Posterior cingulate gyrus (tissue), 11 donors: ENCODE measurements at regions of chr3 and their contacts with region 1.

Region 1: GRCh38 chr3:102229062-102229655 is 205.7 kb upstream of the ZPLD1 start:
- DNase-seq: peak; percentile 47 to 96 (median 81)

Region 2: GRCh38 chr3:101695779-101696372 is 533.3 kb before region 1 on chr3:
- intact Hi-C with region 1: loop called (anchors 5 kb)
- DNase-seq: peak in 2 of 10 donors; percentile 19 to 23

Region 3: DNA sequence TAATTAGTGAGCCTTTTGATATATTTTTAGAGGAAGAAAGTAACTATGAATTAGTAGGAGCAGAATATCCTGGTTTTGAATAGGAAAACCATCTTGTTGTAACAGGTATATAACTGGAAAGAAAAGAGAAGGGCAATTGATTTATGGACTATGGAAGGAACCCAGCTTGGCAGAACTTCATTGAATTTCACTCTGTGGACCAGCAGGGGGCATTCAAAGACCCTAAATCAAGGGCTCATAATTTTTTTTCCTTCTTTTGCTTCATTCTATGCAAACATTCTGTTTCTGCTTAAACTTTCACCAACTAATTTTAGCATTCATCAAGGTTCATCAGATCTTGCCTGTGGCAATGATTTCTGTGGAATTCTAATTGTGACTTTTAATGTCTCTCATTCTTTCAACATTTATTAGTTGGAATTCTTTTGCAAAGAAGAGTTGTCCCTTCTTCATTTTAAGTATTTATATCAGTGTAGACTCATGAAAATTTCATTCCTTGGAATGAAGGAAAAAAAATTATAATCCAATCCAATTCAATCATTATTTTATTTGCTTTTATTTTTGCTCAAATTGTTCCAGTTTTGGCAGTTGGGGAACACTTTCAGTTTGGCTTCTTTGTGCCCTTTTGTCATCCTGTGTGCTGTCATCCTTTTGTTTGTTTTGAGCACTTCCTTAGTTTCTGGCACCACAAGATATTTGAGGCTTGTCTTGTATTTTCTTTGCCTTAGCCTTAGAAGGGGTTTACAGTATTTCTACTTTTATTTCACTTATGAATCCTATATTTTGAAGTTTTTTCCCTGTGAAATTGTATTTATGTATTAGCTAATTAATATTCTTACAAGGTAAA is 419.8 kb before region 1 on chr3:
- intact Hi-C with region 1: loop called (anchors 2 kb)
- DNase-seq: peak in 1 of 10 donors; percentile 20

Region 4: GRCh38 chr3:102536456-102536855 is 307.3 kb after region 1 on chr3:
- intact Hi-C with region 1: loop called (anchors 1 kb)
- DNase-seq: no peak

Region 5: GRCh38 chr3:103052236-103052830 is 823.2 kb after region 1 on chr3:
- intact Hi-C with region 1: no loop called
- DNase-seq: peak in 4 of 10 donors; percentile 6 to 50 (median 16)